Activated T-helper 1 cell treated with anti-CD3 and anti-CD28 coated beads, Interleukin-12 subunit alpha, Interleukin-12 subunit beta, Interleukin-2, Interleukin-4 antibody, amounts not matched to agents 30 ng/mL and 10 ng/mL and 1 ng/mL, durations not matched to agents 14 hours and 24 hours and 36 hours (primary cell): ENCODE measurements at regions of chr12 and their contacts with region 1.

Region 1: GRCh38 chr12:949453-950191 is at the start of gene RAD52:
- DNase-seq: peak; percentile 94
- H3K4me3 Mint-ChIP-seq: peak within 1 kb of the TSS; percentile 95
- H3K27ac Mint-ChIP-seq: peak within 1 kb of the TSS; percentile 92
- H3K4me1 Mint-ChIP-seq: peaks cover 26% of the 10 kb centered on the region
- H3K27me3 Mint-ChIP-seq: peaks cover 6% of the 10 kb centered on the region
- total RNA-seq, gene RAD52: 15.4 and 17.4 TPM in 2 replicates

Region 2: GRCh38 chr12:117816-118345 is 831.7 kb before region 1 on chr12:
- intact Hi-C with region 1: no loop called
- DNase-seq: no peak
- H3K4me3 Mint-ChIP-seq: no peak overlapping the region
- H3K27ac Mint-ChIP-seq: no peak overlapping the region
- H3K4me1 Mint-ChIP-seq: no peaks in the 10 kb centered on the region
- H3K27me3 Mint-ChIP-seq: no peaks in the 10 kb centered on the region

Region 3: DNA sequence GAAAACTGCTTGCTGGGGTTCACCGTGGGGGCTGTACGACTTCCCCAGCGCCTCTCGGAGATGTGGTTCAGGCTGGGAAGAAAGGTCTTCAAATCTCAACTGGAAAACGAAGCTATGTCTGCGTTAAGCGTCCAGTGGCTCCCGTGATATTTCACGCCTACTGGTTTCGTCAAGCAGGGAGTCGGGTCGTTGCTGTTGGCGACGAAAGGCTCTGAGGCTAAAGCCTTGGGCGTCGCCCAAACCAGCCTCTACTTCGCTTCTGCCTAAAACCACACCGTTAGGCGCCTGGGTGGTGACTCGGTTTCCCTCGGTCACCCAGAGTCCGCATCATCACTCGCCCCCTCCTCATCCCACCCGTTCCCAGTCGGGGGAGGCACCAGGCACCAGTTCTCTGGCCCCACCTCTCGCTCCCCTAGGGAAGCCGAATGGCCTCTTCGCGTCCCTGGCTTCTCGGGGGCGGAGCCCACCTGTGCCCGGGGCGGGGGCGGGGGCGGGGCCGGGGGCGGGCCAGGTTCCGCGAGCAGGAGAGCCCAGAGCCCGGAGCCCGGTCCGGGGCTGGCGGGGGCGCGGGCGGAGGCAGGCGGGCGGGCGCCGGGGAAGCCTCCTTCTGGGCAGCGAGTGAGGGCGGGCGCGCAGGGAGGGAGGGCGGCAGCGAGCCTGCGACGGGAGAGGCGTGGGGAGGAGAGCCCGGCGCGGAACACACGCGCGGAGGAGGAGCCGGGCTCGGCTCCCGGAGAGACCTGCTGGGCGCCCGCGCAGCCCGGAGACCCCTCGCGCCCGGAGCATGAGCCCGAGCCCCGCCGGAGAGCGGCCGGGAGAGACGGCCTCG is 490.0 kb before region 1 on chr12 and contains the start of gene B4GALNT3:
- intact Hi-C with region 1: loop called (anchors 10 kb)
- DNase-seq: peak; percentile 25
- H3K4me3 Mint-ChIP-seq: peak within 1 kb of the TSS; percentile 88
- H3K27ac Mint-ChIP-seq: no peak within 1 kb of the TSS
- H3K4me1 Mint-ChIP-seq: peaks cover 11% of the 10 kb centered on the region
- H3K27me3 Mint-ChIP-seq: peaks cover 73% of the 10 kb centered on the region
- total RNA-seq, gene B4GALNT3: 7.6 and 8.6 TPM in 2 replicates

Region 4: DNA sequence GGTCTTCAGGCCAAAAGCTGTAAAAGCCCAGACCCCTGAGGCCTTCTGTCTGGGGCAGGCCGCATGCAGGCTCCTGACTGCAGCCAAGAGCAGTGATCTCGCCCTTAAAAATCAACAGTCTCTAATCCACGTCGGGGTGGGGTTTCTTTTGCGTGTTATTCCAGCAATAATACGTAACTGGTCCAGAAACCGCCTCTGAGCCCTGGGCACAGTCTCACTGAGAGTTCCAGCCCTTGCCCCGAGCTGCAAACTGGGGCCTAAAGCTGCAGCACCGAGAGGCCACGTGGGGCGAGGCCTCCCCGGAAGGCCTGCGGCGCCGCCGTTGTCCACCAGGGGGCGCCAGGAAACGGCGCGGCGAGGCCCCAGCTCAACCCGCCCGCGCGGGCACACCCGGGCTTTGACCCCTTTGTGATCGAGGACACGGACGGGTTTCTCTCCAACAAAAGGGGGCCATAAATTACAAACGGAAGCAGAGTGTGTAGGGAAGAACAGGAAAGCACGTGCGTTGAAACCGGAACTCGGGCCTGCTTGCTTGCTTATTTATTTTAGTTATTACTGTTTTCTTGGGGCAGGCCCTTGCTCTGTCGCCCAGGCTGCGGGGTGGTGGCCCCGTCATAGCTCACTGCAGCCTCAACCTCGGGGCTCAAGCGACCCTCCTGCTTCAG is 373.5 kb before region 1 on chr12:
- intact Hi-C with region 1: loop called (anchors 1 kb)
- DNase-seq: peak; percentile 81
- H3K4me3 Mint-ChIP-seq: no peak overlapping the region
- H3K27ac Mint-ChIP-seq: peak overlapping the region; percentile 80
- H3K4me1 Mint-ChIP-seq: peaks cover 33% of the 10 kb centered on the region
- H3K27me3 Mint-ChIP-seq: peaks cover 4% of the 10 kb centered on the region

Region 5: DNA sequence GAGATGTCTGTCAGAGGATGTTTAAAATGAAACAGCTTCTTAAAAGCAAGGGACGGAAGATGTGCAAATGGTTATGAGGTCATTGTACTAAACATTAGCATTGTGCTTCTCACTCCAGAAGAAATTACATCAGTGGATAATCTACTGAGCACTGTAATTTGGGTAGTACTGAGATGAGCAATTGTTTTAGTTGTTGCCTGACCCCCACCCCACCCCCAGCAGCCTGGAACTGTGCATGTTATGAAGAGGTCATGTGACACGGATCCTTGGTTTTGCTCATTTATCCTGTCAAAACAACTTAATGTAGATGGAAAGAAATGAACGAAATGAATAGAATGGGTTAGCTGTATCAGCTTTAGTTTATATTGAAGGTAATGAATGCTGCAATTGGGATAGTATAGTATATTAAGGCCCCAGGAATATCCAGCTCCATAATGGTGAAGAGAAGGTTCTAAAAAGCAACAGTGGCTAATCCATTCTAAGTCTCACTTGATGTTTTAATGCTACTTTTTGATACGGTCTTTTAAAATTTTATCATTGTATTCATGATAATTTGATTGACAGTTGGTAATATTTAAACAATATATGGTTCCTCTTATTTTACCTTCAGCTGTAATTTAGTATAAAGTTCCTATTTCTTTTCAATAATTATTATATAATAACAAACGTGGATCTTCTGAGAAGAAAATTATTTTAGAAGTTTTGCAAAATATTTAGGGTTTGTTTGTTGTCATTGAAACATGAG is 138.8 kb before region 1 on chr12:
- intact Hi-C with region 1: loop called (anchors 1 kb)
- DNase-seq: no peak
- H3K4me3 Mint-ChIP-seq: peak overlapping the region; percentile 20
- H3K27ac Mint-ChIP-seq: peak overlapping the region; percentile 75
- H3K4me1 Mint-ChIP-seq: peaks cover 68% of the 10 kb centered on the region
- H3K27me3 Mint-ChIP-seq: no peaks in the 10 kb centered on the region

Region 6: DNA sequence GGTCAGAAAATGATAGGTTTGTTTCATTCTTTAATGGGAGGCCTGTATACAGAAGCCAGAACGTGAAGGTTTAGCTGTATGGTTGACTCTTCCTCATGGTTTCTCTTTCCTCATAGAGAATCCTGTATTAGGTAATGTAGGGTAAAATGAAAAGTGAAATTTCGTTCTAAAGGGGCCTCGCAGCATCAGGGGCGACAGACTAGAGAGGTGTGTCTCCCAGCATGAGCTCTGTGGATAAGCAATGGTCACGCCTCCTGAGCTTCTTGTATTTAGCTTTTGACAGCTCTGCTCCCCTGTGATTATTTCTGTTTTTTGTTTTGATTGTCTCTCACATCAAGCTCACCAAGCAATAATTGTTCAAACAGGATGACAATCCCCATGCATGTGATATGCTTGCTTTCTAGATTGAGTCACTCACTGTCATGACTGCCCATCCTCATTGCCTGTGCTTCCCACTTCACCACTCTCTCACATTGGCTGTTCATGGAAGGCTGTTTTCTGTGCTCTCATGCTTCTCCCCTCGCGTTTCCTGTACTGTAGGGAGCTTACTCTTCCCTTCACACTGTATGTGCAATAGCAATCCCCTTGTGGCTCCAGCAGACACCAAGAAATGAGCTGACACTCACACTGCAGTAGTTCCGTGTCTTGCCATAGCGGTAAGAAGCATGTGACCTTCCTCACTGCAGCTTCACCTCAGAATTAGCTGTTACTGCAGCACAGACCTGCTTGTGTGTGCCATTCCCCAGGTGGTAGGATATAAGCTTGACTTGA is 44.2 kb before region 1 on chr12:
- intact Hi-C with region 1: loop called (anchors 5 kb)
- DNase-seq: no peak
- H3K4me3 Mint-ChIP-seq: peak overlapping the region; percentile 1
- H3K27ac Mint-ChIP-seq: peak overlapping the region; percentile 33
- H3K4me1 Mint-ChIP-seq: peaks cover 33% of the 10 kb centered on the region
- H3K27me3 Mint-ChIP-seq: no peaks in the 10 kb centered on the region

Region 7: GRCh38 chr12:1246637-1247036 is 297.0 kb after region 1 on chr12:
- intact Hi-C with region 1: no loop called
- DNase-seq: no peak
- H3K4me3 Mint-ChIP-seq: no peak overlapping the region
- H3K27ac Mint-ChIP-seq: no peak overlapping the region
- H3K4me1 Mint-ChIP-seq: no peaks in the 10 kb centered on the region
- H3K27me3 Mint-ChIP-seq: no peaks in the 10 kb centered on the region

Region 8: DNA sequence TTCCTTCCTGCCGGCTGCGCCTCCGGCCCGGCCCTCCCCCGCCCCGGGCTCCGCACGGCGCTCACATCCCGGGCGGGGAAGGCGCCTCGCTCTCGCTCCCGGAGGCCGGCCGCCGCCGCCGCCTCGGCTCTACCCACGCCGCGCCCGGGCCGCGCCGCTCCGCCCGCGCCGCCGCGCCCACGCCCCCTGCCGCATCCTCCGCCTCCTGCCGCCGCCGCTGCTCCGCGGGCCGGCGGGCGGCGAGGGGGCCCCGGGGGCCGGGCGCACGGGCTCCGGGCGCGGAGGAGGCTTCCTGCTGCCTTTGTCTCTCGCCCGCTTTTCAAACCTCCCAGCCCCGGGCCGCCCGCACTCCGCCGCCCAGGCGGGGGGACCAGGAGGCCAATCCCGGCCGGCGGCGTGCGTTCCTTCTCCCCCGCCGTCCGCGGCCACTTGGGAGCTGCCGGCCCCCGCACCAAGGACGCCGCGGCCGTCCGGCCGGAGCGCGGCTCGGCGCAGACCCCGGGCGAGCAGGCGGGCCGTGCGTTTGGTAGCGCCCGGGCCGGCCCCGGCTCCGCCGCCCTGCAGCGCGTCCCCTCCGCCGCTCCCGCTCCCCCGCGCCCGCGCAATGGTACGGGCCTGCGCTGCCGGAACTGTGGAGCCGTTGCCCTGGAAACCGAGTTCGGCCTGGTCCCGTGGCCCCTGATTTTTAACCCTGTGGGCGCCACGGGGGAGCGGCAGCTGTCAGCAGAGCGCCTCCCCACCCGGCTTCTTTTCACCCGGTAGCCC is 644.8 kb after region 1 on chr12 and contains the start of gene FBXL14:
- intact Hi-C with region 1: loop called (anchors 1 kb)
- DNase-seq: peak; percentile 88
- H3K4me3 Mint-ChIP-seq: peak within 1 kb of the TSS; percentile 99
- H3K27ac Mint-ChIP-seq: peak within 1 kb of the TSS; percentile 94
- H3K4me1 Mint-ChIP-seq: peaks cover 48% of the 10 kb centered on the region
- H3K27me3 Mint-ChIP-seq: no peaks in the 10 kb centered on the region
- total RNA-seq, gene FBXL14: 19.4 and 20.4 TPM in 2 replicates